ENCODE measurements at regions of chr19 and their contacts with region 1.

Region 1: GRCh38 chr19:35716801-35717666 is 769 bp upstream of the KMT2B start:
- DNase-seq: peak; percentile 64 to 99 (median 98)
- ATAC-seq: peak; percentile 92
- H3K4me3 ChIP-seq: peak overlapping the region; percentile 84
- H3K4me3 Mint-ChIP-seq: peak overlapping the region; percentile 88 to 99 (median 96)
- H3K27ac ChIP-seq: peak overlapping the region; percentile 80
- H3K27ac Mint-ChIP-seq: peak overlapping the region; percentile 22 to 98 (median 92)
- H3K4me1 ChIP-seq: peaks cover 37 to 54% of the 10 kb centered on the region in 2 donors
- H3K4me1 Mint-ChIP-seq: peaks cover 40 to 63% (median 57%) of the 10 kb centered on the region in 7 donors
- H3K27me3 ChIP-seq: no peaks in the 10 kb centered on the region
- H3K27me3 Mint-ChIP-seq: no peaks in the 10 kb centered on the region

Region 2: GRCh38 chr19:35352448-35353304 is 364.4 kb before region 1 on chr19:
- CTCF ChIA-PET with region 1: no interaction called
- POLR2A ChIA-PET with region 1: no interaction called
- intact Hi-C with region 1: loop called in 1 of 2 experiments (anchors 2 kb)
- DNase-seq: peak in 8 of 9 donors; percentile 50 to 73 (median 66)
- ATAC-seq: peak; percentile 85
- H3K4me3 ChIP-seq: no peak overlapping the region
- H3K4me3 Mint-ChIP-seq: peak overlapping the region in 2 of 10 donors; percentile 16 to 21
- H3K27ac ChIP-seq: no peak overlapping the region
- H3K27ac Mint-ChIP-seq: peak overlapping the region in 1 of 9 donors; percentile 54
- H3K4me1 ChIP-seq: peaks cover 3 to 8% of the 10 kb centered on the region in 2 donors
- H3K4me1 Mint-ChIP-seq: peaks cover 9 to 22% (median 12%) of the 10 kb centered on the region in 7 donors
- H3K27me3 ChIP-seq: no peaks in the 10 kb centered on the region
- H3K27me3 Mint-ChIP-seq: no peaks in the 10 kb centered on the region

Region 3: DNA sequence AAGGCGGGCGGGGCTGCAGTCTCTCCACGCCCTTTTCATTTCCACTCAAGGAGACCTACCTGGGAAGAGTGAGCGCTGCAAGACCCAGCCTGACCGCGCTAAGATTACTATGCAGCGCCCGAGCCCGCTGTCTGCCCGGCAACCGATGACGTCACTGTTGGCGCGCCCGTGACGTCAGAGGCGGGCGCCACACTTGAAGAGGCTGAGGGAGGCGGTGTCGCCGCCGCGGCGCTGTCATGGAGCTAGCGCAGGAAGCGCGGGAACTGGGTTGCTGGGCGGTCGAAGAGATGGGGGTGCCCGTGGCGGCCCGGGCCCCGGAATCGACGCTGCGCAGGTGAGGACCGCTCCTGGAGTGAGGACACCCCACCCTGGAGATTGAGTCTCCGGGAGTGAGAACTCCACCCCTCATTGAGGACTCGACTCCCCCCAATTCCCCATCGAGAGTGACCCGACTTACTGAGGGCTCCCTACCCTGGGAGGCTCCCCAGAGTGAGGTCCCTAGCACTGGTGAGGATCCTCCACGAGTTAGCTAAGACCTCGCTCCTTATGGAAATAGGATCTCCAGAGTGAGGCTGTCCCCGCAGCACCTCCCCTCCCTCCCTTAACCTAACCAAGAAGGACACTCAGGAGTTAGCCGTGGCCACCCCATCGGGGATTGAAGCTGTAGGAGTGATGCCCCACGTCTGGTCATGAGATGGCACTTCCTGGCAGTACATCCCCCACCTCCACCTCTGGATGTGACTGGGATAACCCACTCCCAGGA is 104.3 kb before region 1 on chr19 and contains the start of gene HAUS5:
- CTCF ChIA-PET with region 1: no interaction called
- POLR2A ChIA-PET with region 1: no interaction called
- intact Hi-C with region 1: loop called in 1 of 2 experiments (anchors 1 kb)
- DNase-seq: peak; percentile 92 to 99 (median 95)
- ATAC-seq: peak; percentile 92
- H3K4me3 ChIP-seq: peak within 1 kb of the TSS; percentile 98
- H3K4me3 Mint-ChIP-seq: peak within 1 kb of the TSS; percentile 86 to 94 (median 89)
- H3K27ac ChIP-seq: peak within 1 kb of the TSS; percentile 86
- H3K27ac Mint-ChIP-seq: peak within 1 kb of the TSS; percentile 88 to 98 (median 94)
- H3K4me1 ChIP-seq: peaks cover 24 to 28% of the 10 kb centered on the region in 2 donors
- H3K4me1 Mint-ChIP-seq: peaks cover 4 to 50% (median 43%) of the 10 kb centered on the region in 7 donors
- H3K27me3 ChIP-seq: no peaks in the 10 kb centered on the region
- H3K27me3 Mint-ChIP-seq: peaks cover 0 to 2% (median 0%) of the 10 kb centered on the region in 5 donors
- total RNA-seq, gene HAUS5: 23.6 to 40.0 (median 28.4) TPM

Region 4: DNA sequence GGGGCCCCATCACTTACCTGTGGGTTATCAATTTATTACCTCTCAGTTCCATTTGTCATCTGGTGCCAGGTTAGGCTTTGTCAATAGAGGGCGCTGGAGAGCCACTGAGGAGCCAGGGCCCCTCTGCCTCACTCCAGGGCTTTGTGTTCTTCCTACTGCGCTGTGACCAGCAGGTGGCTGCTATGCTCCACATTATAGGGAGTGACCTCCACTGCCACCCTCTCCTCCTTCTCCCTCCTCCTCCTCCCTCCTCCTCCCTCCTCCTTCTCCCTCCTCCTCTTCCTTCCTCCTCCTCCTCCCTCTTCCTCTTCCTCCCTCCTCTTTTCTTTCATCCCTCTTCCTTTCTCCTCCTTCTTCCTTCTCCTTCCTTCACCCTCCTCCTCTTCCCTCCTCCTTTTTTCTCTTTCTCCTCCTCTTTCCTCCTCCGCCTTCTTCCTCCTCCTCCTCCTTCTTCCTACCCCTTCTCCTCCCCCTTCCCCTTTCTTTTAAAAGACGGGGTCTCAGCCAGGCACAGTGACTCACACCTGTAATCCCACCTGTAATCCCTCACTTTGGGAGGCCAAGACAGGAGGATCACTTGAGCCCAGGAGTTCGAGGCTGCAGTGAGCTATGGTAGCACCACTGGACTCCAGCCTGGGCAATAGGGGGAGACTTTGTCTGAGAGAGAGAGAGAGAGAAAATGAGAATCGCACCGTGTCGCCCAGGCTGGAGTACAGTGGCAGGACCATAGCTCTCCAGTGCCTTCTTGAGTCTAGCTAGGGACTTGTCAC is 23.0 kb before region 1 on chr19:
- CTCF ChIA-PET with region 1: interaction called, 5 read pairs
- POLR2A ChIA-PET with region 1: interaction called, 3 read pairs
- intact Hi-C with region 1: loop called (anchors 1 kb)
- DNase-seq: peak; percentile 75 to 93 (median 86)
- ATAC-seq: peak; percentile 100
- H3K4me3 ChIP-seq: no peak overlapping the region
- H3K4me3 Mint-ChIP-seq: no peak overlapping the region
- H3K27ac ChIP-seq: no peak overlapping the region
- H3K27ac Mint-ChIP-seq: peak overlapping the region in 4 of 9 donors; percentile 6 to 62 (median 40)
- H3K4me1 ChIP-seq: no peaks in the 10 kb centered on the region
- H3K4me1 Mint-ChIP-seq: peaks cover 0 to 27% (median 0%) of the 10 kb centered on the region in 7 donors
- H3K27me3 ChIP-seq: no peaks in the 10 kb centered on the region
- H3K27me3 Mint-ChIP-seq: no peaks in the 10 kb centered on the region

Region 5: DNA sequence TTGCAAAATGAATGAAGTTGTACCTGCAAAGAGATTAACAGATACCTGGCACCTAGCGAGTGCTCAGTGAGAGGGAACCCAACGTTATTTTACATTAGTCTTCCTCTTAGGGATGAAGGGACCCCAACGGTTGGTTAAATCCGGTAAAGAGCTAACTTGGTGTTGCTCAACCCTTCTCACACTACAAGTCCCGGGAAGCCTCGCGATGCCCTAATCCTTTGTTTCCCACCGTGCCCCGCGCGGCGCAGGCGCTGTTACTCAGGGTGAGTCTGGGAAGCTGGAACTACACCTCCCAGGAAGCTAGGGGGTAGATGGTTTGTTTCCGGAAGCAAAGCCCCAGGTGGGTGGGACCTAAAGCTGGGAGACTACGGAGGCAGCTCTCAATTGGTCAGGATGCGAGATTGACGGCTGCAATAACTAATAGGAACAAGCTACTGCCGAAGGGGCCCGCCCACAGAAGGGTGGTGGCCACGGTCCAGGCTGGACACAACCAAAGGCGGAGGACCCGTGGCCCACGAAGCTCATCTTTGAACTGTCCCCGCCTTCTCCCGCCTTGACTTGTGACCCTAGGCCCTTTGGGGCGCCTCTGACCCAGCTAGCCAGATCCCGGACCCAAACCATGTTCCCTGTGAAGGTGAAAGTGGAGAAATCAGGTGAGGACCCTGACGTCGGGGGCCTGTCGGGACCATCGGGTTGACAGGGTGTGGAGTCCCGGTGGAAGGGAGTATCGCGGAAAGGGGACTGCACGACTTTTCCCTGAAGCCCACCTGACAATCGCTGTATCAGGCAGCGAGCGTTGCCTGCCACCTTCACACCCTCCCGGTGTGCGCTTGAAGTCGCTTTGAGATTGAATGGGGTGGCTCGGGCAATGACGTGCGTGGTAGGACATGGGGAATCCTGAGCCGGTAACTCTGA is 31.3 kb after region 1 on chr19 and contains the start of gene LIN37:
- CTCF ChIA-PET with region 1: no interaction called
- POLR2A ChIA-PET with region 1: interaction called, 20 read pairs
- intact Hi-C with region 1: loop called (anchors 1 kb)
- DNase-seq: peak; percentile 91 to 100 (median 99)
- ATAC-seq: peak; percentile 83
- H3K4me3 ChIP-seq: peak within 1 kb of the TSS; percentile 95
- H3K4me3 Mint-ChIP-seq: peak within 1 kb of the TSS; percentile 90 to 100 (median 98)
- H3K27ac ChIP-seq: peak within 1 kb of the TSS; percentile 85
- H3K27ac Mint-ChIP-seq: peak within 1 kb of the TSS; percentile 89 to 97 (median 95)
- H3K4me1 ChIP-seq: peaks cover 28 to 30% of the 10 kb centered on the region in 2 donors
- H3K4me1 Mint-ChIP-seq: peaks cover 14 to 56% (median 43%) of the 10 kb centered on the region in 7 donors
- H3K27me3 ChIP-seq: no peaks in the 10 kb centered on the region
- H3K27me3 Mint-ChIP-seq: peaks cover 0 to 2% (median 0%) of the 10 kb centered on the region in 5 donors
- total RNA-seq, gene LIN37: 7.9 to 33.1 (median 18.9) TPM

Region 6: GRCh38 chr19:35822579-35822978 is 105.5 kb after region 1 on chr19:
- CTCF ChIA-PET with region 1: interaction called, 3 read pairs
- POLR2A ChIA-PET with region 1: no interaction called
- intact Hi-C with region 1: loop called in 1 of 2 experiments (anchors 1 kb)
- DNase-seq: no peak
- ATAC-seq: no peak
- H3K4me3 ChIP-seq: no peak overlapping the region
- H3K4me3 Mint-ChIP-seq: no peak overlapping the region
- H3K27ac ChIP-seq: no peak overlapping the region
- H3K27ac Mint-ChIP-seq: peak overlapping the region in 1 of 9 donors; percentile 65
- H3K4me1 ChIP-seq: no peaks in the 10 kb centered on the region
- H3K4me1 Mint-ChIP-seq: peaks cover 0 to 3% (median 0%) of the 10 kb centered on the region in 7 donors
- H3K27me3 ChIP-seq: peaks cover 0 to 2% of the 10 kb centered on the region in 2 donors
- H3K27me3 Mint-ChIP-seq: peaks cover 14 to 34% (median 19%) of the 10 kb centered on the region in 5 donors

Region 7: DNA sequence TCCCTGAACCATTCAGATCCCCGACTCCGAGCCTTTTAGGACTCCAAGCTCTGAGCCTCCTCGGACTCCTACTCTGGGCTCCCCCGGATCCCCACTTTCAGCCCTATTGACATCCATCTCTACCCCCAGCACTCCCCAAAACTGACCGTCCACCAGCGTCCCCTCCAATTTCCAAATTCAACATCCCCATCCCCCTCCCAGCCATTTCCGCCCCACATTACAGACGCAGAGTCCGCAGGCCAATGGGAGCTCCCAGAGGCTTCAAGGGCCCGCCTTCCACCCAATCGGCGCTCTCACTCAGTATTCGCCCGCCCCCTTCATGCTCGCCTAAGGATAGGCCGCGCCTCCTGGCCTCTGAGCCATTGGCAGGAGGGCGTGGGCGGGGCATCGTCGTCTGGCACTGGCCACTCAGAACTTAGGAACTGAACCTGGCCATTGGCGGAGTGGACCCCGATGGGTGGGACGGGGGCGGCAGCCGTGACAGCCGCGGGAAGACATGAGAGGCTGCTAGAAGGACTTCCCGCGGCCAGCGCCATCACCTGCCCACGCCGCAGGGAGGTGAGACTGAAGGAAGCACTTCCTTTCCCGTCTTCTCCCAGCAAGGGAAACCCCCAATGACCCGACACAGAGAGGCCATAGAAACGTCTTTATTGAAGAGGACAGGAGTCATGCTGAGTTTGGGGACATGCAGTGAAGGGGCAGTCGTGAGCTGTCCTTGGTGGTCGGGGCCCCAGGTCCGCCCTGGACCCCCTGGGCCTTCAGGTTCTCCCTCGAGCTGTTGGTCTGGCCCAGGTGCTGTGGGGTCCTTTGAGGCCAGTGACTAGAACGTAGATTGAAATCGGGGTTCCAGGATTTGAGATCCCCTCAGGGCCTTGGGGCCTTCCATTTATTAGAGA is 297.2 kb after region 1 on chr19 and contains the start of gene ALKBH6:
- CTCF ChIA-PET with region 1: no interaction called
- POLR2A ChIA-PET with region 1: no interaction called
- intact Hi-C with region 1: loop called in 1 of 2 experiments (anchors 5 kb)
- DNase-seq: peak; percentile 94 to 98 (median 97)
- ATAC-seq: peak; percentile 100
- H3K4me3 ChIP-seq: peak within 1 kb of the TSS; percentile 93
- H3K4me3 Mint-ChIP-seq: peak within 1 kb of the TSS; percentile 92 to 99 (median 95)
- H3K27ac ChIP-seq: peak within 1 kb of the TSS; percentile 86
- H3K27ac Mint-ChIP-seq: peak within 1 kb of the TSS; percentile 88 to 99 (median 94)
- H3K4me1 ChIP-seq: peaks cover 12 to 18% of the 10 kb centered on the region in 2 donors
- H3K4me1 Mint-ChIP-seq: peaks cover 36 to 53% (median 46%) of the 10 kb centered on the region in 7 donors
- H3K27me3 ChIP-seq: no peaks in the 10 kb centered on the region
- H3K27me3 Mint-ChIP-seq: no peaks in the 10 kb centered on the region
- total RNA-seq, gene ALKBH6: 32.6 to 60.6 (median 49.3) TPM

Measured in naive thymus-derived CD4-positive, alpha-beta T cell (primary cell).